Activated T-helper 1 cell treated with anti-CD3 and anti-CD28 coated beads, Interleukin-12 subunit alpha, Interleukin-12 subunit beta, Interleukin-2, Interleukin-4 antibody, amounts not matched to agents 30 ng/mL and 10 ng/mL and 1 ng/mL, durations not matched to agents 14 hours and 24 hours and 36 hours (primary cell): ENCODE measurements at regions of chr1 and their contacts with region 1.

Region 1: GRCh38 chr1:116006486-116006964 is 30.2 kb downstream of the SLC22A15 start:
- DNase-seq: peak; percentile 28
- H3K4me3 Mint-ChIP-seq: peak overlapping the region; percentile 78
- H3K27ac Mint-ChIP-seq: peak overlapping the region; percentile 92
- H3K4me1 Mint-ChIP-seq: peaks cover 16% of the 10 kb centered on the region
- H3K27me3 Mint-ChIP-seq: peaks cover 1% of the 10 kb centered on the region

Region 2: GRCh38 chr1:115098979-115099692 is 907.4 kb before region 1 on chr1:
- intact Hi-C with region 1: loop called (anchors 10 kb)
- DNase-seq: peak; percentile 70
- H3K4me3 Mint-ChIP-seq: peak overlapping the region; percentile 89
- H3K27ac Mint-ChIP-seq: peak overlapping the region; percentile 98
- H3K4me1 Mint-ChIP-seq: peaks cover 30% of the 10 kb centered on the region
- H3K27me3 Mint-ChIP-seq: peaks cover 16% of the 10 kb centered on the region

Region 3: DNA sequence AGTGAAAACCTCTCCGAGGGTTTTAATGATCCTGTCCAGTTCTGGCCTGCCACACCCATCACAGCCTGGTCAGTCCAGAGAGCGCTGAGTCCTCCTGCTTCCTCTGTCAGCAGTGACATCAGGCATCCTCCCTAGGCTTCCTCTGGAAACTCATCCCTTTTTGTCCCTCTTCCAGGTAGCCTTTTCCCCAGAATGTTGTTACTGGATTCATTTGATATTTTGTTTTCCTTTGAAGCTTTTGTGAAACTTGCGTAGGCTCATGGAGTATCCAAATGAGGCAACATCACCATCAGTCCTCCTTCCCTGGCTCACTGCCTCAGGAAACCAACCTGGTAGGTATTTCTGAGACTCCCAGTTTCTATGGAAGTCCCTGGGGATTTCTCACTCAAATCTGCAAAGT is 688.0 kb after region 1 on chr1:
- intact Hi-C with region 1: no loop called
- DNase-seq: no peak
- H3K4me3 Mint-ChIP-seq: no peak overlapping the region
- H3K27ac Mint-ChIP-seq: no peak overlapping the region
- H3K4me1 Mint-ChIP-seq: no peaks in the 10 kb centered on the region
- H3K27me3 Mint-ChIP-seq: peaks cover 3% of the 10 kb centered on the region